Calu3 (cell line): ENCODE measurements at regions of chr13 and their contacts with region 1.

Region 1: DNA sequence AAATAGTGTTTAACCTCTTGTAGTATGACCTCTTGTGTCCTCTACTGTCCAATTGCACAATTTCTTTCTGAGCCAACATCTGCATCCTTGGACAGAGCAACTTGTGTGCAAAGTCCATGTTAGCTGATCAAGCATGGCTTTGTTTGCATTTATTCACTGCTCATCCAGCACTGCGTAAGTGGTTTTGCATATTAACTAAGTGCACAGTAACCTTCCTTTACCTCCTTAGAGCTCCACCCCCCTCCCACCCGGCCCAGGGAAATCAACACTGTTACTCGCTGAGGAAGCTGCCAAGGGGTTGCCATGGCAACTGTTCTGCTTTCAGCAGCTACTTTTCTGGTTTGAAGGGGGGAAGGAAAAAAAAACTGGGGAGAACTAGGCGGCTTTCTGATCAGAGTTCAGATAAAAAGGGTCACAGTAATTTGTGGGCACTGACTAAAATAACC is 153.5 kb upstream of the KLF12 start:
- DNase-seq: peak; percentile 35
- H3K4me3 Mint-ChIP-seq: peak overlapping the region; percentile 62
- H3K27ac Mint-ChIP-seq: peak overlapping the region; percentile 82
- H3K4me1 Mint-ChIP-seq: peaks cover 17% of the 10 kb centered on the region
- H3K27me3 Mint-ChIP-seq: no peaks in the 10 kb centered on the region
- CTCF ChIP-seq: no peak

Region 2: GRCh38 chr13:73129023-73129422 is 1158.7 kb before region 1 on chr13:
- CTCF ChIA-PET with region 1: no interaction called
- intact Hi-C with region 1: no loop called
- DNase-seq: no peak
- H3K4me3 Mint-ChIP-seq: no peak overlapping the region
- H3K27ac Mint-ChIP-seq: no peak overlapping the region
- H3K4me1 Mint-ChIP-seq: peaks cover 14% of the 10 kb centered on the region
- H3K27me3 Mint-ChIP-seq: no peaks in the 10 kb centered on the region
- CTCF ChIP-seq: no peak

Region 3: DNA sequence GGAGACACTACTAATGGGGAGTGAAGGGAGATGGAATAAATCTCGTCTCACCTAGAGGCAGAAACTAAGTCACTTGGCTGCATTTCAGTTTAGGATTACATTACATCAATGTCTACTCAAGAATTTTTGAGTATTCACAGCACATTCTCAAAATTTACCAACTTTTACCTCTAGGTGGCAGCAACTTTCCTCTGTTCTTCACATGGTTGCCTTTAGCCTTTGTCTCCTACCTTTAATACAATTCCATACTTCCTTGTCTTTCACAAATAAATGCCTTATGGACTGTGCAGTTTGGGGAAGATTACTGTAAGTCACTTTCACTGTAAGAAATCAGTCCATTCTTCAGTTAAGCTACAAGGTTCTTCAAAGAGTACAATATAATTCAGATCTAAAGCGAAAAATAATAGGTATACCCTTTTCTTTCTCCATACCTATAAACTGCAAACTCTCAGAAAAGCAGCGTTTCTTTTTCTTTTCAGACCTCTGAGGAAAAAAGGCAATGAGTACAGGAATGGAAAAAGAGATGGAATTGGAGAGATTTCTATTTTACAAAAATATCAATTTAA is 532.9 kb before region 1 on chr13:
- CTCF ChIA-PET with region 1: no interaction called
- intact Hi-C with region 1: loop called (anchors 10 kb)
- DNase-seq: peak; percentile 32
- H3K4me3 Mint-ChIP-seq: no peak overlapping the region
- H3K27ac Mint-ChIP-seq: no peak overlapping the region
- H3K4me1 Mint-ChIP-seq: no peaks in the 10 kb centered on the region
- H3K27me3 Mint-ChIP-seq: no peaks in the 10 kb centered on the region
- CTCF ChIP-seq: no peak

Region 4: DNA sequence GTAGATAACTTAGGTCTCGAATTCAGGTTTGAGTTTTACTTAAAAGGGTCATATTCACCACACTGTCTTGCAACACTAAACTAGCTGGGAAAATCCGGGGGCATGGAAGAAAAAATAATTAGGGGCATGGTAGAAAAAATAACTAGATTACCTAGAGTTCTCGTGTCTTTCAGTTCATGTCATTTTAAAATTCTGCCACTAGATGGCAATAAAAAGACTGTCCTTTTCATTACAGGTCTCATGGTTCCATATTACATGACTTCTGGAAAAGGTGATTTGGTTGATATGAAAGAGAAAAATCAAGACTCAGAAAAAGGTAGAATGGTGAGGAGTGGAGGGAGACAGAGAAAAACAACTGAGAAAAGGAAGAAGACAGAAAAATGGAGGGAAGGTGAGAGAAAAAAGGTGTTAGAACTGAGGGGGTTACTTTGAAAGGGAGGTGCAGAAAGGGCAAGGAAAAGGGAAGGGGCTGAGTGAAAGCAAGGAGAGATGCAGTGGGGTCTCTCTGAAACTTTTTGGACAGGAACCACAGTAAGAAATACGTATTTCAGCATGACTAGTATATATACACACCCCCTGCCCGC is 452.5 kb before region 1 on chr13:
- CTCF ChIA-PET with region 1: interaction called, 4 read pairs
- intact Hi-C with region 1: loop called (anchors 1 kb)
- DNase-seq: no peak
- H3K4me3 Mint-ChIP-seq: no peak overlapping the region
- H3K27ac Mint-ChIP-seq: no peak overlapping the region
- H3K4me1 Mint-ChIP-seq: no peaks in the 10 kb centered on the region
- H3K27me3 Mint-ChIP-seq: no peaks in the 10 kb centered on the region
- CTCF ChIP-seq: no peak

Region 5: DNA sequence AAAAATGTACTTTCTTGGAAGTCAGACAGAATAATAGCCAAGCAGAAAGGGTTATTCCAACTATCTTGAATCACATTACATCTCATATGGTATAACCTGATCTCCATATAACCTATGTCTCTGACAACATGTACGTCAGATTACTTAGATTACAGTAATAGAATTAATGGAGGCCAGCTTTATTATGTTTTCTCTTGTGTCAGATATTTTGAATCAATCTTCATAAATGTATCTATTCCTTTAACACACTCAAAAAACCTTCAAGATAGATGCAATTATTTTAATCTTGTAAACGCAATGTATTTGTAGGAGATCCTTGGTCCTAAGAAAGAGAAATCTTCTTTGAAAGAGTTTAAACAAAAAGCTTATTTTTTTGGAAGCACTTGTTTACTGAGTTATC is 34.8 kb after region 1 on chr13:
- CTCF ChIA-PET with region 1: no interaction called
- intact Hi-C with region 1: loop called (anchors 1 kb)
- DNase-seq: no peak
- H3K4me3 Mint-ChIP-seq: no peak overlapping the region
- H3K27ac Mint-ChIP-seq: no peak overlapping the region
- H3K4me1 Mint-ChIP-seq: no peaks in the 10 kb centered on the region
- H3K27me3 Mint-ChIP-seq: no peaks in the 10 kb centered on the region
- CTCF ChIP-seq: no peak

Region 6: GRCh38 chr13:74530011-74530410 is 242.3 kb after region 1 on chr13:
- CTCF ChIA-PET with region 1: no interaction called
- intact Hi-C with region 1: no loop called
- DNase-seq: no peak
- H3K4me3 Mint-ChIP-seq: no peak overlapping the region
- H3K27ac Mint-ChIP-seq: no peak overlapping the region
- H3K4me1 Mint-ChIP-seq: no peaks in the 10 kb centered on the region
- H3K27me3 Mint-ChIP-seq: no peaks in the 10 kb centered on the region
- CTCF ChIP-seq: no peak

Region 7: DNA sequence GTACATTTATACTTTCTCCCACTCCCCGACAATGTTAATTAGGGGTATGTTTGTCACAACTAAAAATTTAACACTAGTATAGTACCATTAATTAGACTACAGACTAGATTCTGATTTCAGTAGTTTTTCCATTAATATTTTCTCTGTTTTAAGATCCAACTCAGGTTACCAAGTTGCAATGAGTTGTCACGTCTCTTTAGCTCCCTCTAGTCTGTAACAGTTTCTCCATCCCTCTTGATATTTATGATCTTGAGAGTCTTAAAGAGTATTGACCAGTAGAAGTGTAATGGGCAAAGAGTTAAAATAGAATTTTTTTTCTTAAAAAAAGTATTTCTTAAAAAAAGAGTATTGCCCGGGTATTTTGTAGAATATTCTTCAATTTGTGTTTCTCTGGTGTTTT is 596.1 kb after region 1 on chr13:
- CTCF ChIA-PET with region 1: no interaction called
- intact Hi-C with region 1: no loop called
- DNase-seq: no peak
- H3K4me3 Mint-ChIP-seq: no peak overlapping the region
- H3K27ac Mint-ChIP-seq: no peak overlapping the region
- H3K4me1 Mint-ChIP-seq: peaks cover 8% of the 10 kb centered on the region
- H3K27me3 Mint-ChIP-seq: no peaks in the 10 kb centered on the region
- CTCF ChIP-seq: no peak